Vagina (tissue), 2 donors: ENCODE measurements at regions of chr6 and their contacts with region 1.

Region 1: DNA sequence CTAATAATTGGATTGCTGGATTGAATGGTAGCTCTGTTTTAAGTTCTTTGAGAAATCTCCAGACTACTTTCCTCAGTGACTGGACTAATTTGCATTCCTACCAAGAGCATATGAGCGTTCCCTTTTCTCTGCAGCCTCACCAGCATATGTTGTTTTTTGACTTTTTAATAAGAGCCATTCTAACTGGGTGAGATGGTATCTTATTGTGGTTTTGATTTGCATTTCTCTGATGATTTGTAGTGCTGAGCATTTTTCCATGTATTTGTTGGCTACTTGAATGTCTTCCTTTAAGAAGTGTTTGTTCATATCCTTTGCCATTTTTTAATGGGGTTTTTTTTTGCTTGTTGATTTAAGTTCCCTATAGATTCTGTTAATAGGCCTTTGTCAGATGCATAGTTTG is 94.7 kb upstream of the AHI1 start:
- DNase-seq: no peak
- H3K4me3 ChIP-seq: no peak overlapping the region
- H3K27ac ChIP-seq: no peak overlapping the region
- H3K4me1 ChIP-seq: no peaks in the 10 kb centered on the region
- H3K27me3 ChIP-seq: no peaks in the 10 kb centered on the region
- CTCF ChIP-seq: no peak
- POLR2A ChIP-seq: no peak

Region 2: DNA sequence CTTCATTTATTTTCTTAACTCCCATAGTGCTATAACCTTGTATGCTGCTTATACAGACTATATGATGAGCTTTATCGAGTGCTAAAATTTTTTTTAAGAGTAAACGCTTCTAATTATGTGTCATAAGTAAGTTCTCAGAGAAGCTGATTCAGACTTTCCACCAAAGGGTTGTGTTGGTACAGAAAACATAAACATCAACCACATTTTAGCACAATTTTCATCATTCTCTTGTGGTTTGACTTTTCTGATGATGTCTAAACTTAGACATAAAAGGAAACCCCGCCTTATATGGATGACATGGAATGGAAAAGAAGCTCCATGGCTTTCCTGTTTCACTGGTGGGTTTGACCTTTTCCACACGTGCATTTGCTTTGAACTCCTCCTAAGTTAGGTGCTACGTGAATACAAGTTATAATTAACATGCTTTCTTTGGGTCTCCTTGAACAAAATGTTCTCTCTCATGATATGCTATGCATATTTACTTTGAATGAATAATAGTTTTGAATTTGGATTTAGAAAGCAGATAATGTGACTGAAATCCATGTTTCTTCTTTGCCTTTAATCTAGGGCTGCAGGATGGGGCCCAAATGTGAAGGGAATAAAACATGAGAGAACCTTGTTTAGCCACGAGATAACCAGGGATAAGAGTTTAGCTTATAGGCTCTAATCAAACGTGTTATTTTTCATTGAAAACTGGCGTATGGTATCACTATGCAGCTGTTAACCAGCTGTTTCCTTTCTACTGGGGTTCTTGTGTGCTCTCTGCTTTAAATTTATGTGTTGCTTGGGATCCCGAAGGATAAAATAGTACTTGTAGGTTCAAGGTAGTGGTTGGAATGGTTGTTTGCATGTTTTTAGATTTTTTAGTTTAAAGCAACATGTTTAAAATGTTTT is 32.4 kb after region 1 on chr6:
- intact Hi-C with region 1: loop called (anchors 2 kb)
- DNase-seq: no peak
- H3K4me3 ChIP-seq: no peak overlapping the region
- H3K27ac ChIP-seq: no peak overlapping the region
- H3K4me1 ChIP-seq: no peaks in the 10 kb centered on the region
- H3K27me3 ChIP-seq: no peaks in the 10 kb centered on the region
- CTCF ChIP-seq: no peak
- POLR2A ChIP-seq: no peak

Region 3: DNA sequence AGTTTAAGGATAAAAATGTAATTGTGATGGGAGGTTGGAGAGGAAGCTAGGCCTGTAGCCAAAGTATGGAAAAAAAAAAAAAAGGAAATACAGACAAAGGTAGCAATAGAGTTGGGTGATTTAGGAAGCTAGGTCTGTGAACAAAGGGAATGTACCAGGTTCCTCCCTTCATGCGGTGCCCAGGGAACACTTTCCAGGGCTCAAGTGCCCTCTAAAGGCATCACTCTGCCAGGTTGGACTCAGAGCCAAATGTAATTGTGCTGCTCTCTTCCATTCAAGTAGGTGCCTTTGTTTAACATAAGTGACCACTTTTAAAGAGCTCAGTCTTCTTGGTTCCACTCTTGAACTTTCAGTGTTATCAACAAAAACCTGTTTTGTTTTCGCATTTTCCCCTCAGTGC is 64.9 kb after region 1 on chr6:
- intact Hi-C with region 1: no loop called
- DNase-seq: no peak
- H3K4me3 ChIP-seq: no peak overlapping the region
- H3K27ac ChIP-seq: no peak overlapping the region
- H3K4me1 ChIP-seq: no peaks in the 10 kb centered on the region
- H3K27me3 ChIP-seq: no peaks in the 10 kb centered on the region
- CTCF ChIP-seq: no peak
- POLR2A ChIP-seq: no peak